CD8-positive, alpha-beta T cell (primary cell): ENCODE measurements at regions of chr1 and their contacts with region 1.

Region 1: GRCh38 chr1:64834734-64835133 is 89.9 kb downstream of the RAVER2 start:
- DNase-seq: no peak
- ATAC-seq: no peak
- H3K4me3 ChIP-seq: no peak overlapping the region
- H3K4me3 Mint-ChIP-seq: no peak overlapping the region
- H3K27ac ChIP-seq: no peak overlapping the region
- H3K27ac Mint-ChIP-seq: no peak overlapping the region
- H3K4me1 ChIP-seq: peaks cover 4% of the 10 kb centered on the region
- H3K4me1 Mint-ChIP-seq: peaks cover 6% of the 10 kb centered on the region
- H3K27me3 ChIP-seq: no peaks in the 10 kb centered on the region
- H3K27me3 Mint-ChIP-seq: no peaks in the 10 kb centered on the region
- CTCF ChIP-seq: no peak

Region 2: GRCh38 chr1:64539781-64540218 is 294.9 kb before region 1 on chr1:
- CTCF ChIA-PET with region 1: no interaction called
- POLR2A ChIA-PET with region 1: no interaction called
- intact Hi-C with region 1: loop called in 1 of 2 experiments (anchors 10 kb)
- DNase-seq: peak in 1 of 9 experiments; percentile 22
- ATAC-seq: no peak
- H3K4me3 ChIP-seq: no peak overlapping the region
- H3K4me3 Mint-ChIP-seq: peak overlapping the region; percentile 68
- H3K27ac ChIP-seq: no peak overlapping the region
- H3K27ac Mint-ChIP-seq: peak overlapping the region; percentile 92
- H3K4me1 ChIP-seq: peaks cover 53% of the 10 kb centered on the region
- H3K4me1 Mint-ChIP-seq: peaks cover 54% of the 10 kb centered on the region
- H3K27me3 ChIP-seq: no peaks in the 10 kb centered on the region
- H3K27me3 Mint-ChIP-seq: no peaks in the 10 kb centered on the region
- CTCF ChIP-seq: no peak